Activated naive CD4-positive, alpha-beta T cell treated with anti-CD3 and anti-CD28 coated beads for 36 hours (primary cell): ENCODE measurements at regions of chr10 and their contacts with region 1.

Region 1: GRCh38 chr10:119165171-119166110 is at the start of gene SFXN4:
- DNase-seq: peak; percentile 75
- H3K4me3 Mint-ChIP-seq: peak within 1 kb of the TSS; percentile 83
- H3K27ac Mint-ChIP-seq: peak within 1 kb of the TSS; percentile 85
- H3K4me1 Mint-ChIP-seq: peaks cover 42% of the 10 kb centered on the region
- H3K27me3 Mint-ChIP-seq: no peaks in the 10 kb centered on the region
- total RNA-seq, gene SFXN4: 46.1 to 51.7 TPM

Region 2: DNA sequence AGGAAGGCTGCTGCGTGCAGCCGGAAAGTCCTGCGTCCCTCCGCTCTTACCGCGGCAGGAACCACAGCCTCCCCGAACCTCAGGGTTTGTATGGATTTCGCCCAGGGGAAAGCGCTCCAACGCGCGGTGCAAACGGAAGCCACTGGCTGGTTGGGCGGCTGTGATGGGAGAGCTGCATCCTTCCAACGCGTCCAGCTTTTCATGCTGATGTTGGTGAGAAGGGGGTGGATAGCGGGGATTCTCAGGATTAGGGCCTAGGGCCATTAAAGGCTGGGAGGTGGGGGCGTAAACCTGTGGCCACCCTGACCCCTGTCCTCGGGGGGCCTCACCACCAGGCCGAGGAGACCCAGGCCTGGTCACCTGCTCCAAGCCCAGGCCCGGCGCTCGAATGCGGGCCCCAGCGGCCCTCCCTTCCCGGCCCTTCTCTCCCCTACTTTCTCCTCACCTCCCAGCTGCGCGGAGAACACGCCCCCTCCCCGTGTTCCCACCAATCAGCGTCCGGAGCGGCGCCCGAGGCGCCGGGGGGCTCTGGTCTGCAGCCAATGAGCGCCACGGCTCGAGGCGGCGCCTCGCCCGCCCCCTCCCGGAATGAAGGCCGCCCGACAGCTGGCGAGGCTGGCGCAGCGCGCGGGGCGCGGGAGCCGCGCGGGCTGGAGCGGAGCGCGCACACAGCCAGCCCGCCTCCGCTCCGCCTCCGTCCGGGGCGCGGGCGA is 136.4 kb before region 1 on chr10:
- CTCF ChIA-PET with region 1: no interaction called
- intact Hi-C with region 1: loop called (anchors 1 kb)
- DNase-seq: peak; percentile 73
- H3K4me3 Mint-ChIP-seq: peak overlapping the region; percentile 66
- H3K27ac Mint-ChIP-seq: no peak overlapping the region
- H3K4me1 Mint-ChIP-seq: peaks cover 16% of the 10 kb centered on the region
- H3K27me3 Mint-ChIP-seq: peaks cover 4% of the 10 kb centered on the region

Region 3: GRCh38 chr10:119080521-119081260 is 84.8 kb before region 1 on chr10 and contains the start of gene EIF3A:
- CTCF ChIA-PET with region 1: no interaction called
- intact Hi-C with region 1: loop called (anchors 1 kb)
- DNase-seq: peak; percentile 90
- H3K4me3 Mint-ChIP-seq: peak within 1 kb of the TSS; percentile 95
- H3K27ac Mint-ChIP-seq: peak within 1 kb of the TSS; percentile 98
- H3K4me1 Mint-ChIP-seq: peaks cover 33% of the 10 kb centered on the region
- H3K27me3 Mint-ChIP-seq: no peaks in the 10 kb centered on the region
- total RNA-seq, gene EIF3A: 113 to 120 TPM

Region 4: DNA sequence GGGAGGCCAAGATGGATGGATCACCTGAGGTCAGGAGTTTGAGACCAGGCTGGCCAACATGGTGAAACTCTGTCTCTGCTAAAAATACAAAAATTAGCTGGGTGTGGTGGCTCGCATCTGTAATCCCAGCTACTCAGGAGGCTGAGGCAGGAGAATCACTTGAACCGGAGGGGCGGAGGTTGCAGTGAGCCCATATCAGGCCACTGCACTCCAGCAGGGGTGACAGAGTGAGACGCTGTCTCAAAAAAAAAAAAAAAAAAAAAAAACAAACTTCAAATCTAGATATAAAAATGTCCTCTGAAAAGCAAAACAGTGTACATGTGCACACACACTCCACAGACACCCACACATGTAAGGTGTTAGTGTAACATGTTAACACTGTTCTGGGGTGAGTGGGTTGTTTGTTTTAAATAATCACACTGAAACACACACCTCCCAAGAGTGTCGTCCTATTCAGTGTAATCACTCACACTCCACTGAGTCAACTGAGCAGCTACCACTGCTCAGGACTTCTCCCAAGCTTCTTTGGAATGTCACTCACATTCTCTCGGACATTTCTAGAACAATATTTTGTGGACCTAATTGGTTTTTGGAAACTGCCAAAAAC is 389.8 kb after region 1 on chr10:
- CTCF ChIA-PET with region 1: no interaction called
- intact Hi-C with region 1: no loop called
- DNase-seq: no peak
- H3K4me3 Mint-ChIP-seq: no peak overlapping the region
- H3K27ac Mint-ChIP-seq: no peak overlapping the region
- H3K4me1 Mint-ChIP-seq: no peaks in the 10 kb centered on the region
- H3K27me3 Mint-ChIP-seq: no peaks in the 10 kb centered on the region